ENCODE measurements at regions of chr14 and their contacts with region 1.

Region 1: DNA sequence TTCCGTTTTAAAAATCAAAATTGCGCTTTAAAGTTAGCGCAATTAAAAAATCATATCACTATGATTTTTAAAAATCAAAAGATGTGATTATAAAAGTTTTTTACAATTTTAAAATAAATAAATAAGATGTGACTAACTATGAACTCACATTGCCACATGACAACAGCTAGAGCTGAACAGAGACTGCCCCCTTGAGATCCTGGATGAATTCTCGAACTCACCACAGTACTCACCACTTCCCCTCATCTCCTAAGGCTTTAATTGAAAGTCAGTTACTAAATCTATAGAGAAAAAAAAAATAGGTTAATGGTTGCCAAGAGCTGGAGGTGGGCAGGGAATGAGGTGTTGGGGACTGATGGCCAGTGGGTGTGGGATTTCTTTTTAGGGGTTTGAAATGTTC is 384.2 kb downstream of the ZFP36L1 start:
- DNase-seq: peak; percentile 63
- ATAC-seq: peak; percentile 59
- H3K4me3 ChIP-seq: no peak overlapping the region
- H3K27ac ChIP-seq: peak overlapping the region; percentile 22; the same call in 1 of the 2 replicates
- H3K4me1 ChIP-seq: peaks cover 56% of the 10 kb centered on the region
- H3K27me3 ChIP-seq: no peaks in the 10 kb centered on the region
- CTCF ChIP-seq: peak; percentile 63

Region 2: GRCh38 chr14:68244262-68244980 is 164.3 kb before region 1 on chr14:
- CTCF ChIA-PET with region 1: no interaction called
- POLR2A ChIA-PET with region 1: no interaction called
- intact Hi-C with region 1: no loop called
- DNase-seq: no peak
- ATAC-seq: no peak
- H3K4me3 ChIP-seq: no peak overlapping the region
- H3K27ac ChIP-seq: no peak overlapping the region
- H3K4me1 ChIP-seq: peaks cover 41% of the 10 kb centered on the region
- H3K27me3 ChIP-seq: no peaks in the 10 kb centered on the region
- CTCF ChIP-seq: no peak

Region 3: DNA sequence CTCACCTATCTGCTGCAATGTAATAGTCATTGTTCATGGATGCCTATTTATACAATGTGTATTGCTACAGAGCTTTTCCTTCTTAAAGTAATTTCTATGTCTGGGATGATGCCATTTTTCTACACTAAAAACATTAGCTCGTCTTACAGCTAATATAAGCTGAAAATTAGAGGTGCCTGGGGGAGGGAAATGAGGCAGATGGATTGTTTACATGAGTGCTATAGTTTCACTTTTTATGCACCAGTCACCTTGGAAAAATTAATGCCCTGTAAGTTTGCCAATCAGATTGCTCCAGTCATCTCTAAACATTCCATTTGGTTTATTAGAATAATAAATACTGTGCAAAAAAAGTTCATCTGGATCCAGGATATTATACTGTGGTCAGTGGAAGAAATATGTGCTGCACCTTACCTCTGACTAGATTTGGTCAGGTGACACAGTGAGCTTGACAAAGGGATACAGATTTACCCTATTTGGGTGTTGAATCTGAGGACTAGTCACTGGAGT is 152.9 kb before region 1 on chr14:
- CTCF ChIA-PET with region 1: interaction called, 3 read pairs
- POLR2A ChIA-PET with region 1: interaction called, 11 read pairs
- intact Hi-C with region 1: loop called (anchors 1 kb)
- DNase-seq: peak; percentile 94
- ATAC-seq: peak; percentile 98
- H3K4me3 ChIP-seq: no peak overlapping the region
- H3K27ac ChIP-seq: peak overlapping the region; percentile 29
- H3K4me1 ChIP-seq: peaks cover 33% of the 10 kb centered on the region
- H3K27me3 ChIP-seq: no peaks in the 10 kb centered on the region
- CTCF ChIP-seq: no peak

Region 4: DNA sequence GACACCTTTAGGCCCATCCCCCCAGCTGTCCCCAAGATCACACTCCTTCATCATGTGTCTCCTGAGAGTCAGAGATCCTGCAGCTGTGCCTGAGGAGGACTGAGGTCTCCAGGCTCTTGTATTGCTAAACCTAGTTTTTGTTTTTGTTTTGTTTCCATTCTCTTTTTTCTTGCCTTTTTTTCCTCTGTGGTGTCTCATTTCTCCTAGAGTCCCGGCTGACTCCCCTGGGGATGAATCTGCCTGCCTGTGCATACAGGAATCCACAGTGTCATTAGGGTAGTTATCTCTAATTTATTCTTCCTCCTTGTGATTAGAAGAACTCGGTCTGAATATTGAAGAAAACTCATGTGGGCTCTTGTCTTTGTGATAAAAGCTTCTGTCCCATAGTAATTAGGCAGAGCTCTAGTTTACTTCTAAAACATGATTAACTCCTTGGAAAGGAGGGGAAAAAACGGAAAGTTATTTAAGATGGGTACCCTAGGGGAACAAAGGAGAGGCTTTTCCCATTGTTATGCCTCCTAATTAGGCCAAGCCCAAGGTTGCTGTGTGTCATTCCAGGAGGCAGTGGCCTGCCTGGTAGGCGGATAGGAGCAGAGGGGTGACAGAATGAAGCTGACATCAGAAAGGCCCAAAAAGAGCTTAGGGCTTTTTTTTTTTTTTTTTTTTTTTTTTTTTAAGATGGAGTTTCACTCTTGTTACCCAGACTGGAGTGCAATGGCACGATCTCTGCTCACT is 41.0 kb after region 1 on chr14:
- CTCF ChIA-PET with region 1: no interaction called
- POLR2A ChIA-PET with region 1: no interaction called
- intact Hi-C with region 1: loop called (anchors 2 kb)
- DNase-seq: no peak
- ATAC-seq: no peak
- H3K4me3 ChIP-seq: no peak overlapping the region
- H3K27ac ChIP-seq: no peak overlapping the region
- H3K4me1 ChIP-seq: peaks cover 24% of the 10 kb centered on the region
- H3K27me3 ChIP-seq: no peaks in the 10 kb centered on the region
- CTCF ChIP-seq: no peak

Region 5: DNA sequence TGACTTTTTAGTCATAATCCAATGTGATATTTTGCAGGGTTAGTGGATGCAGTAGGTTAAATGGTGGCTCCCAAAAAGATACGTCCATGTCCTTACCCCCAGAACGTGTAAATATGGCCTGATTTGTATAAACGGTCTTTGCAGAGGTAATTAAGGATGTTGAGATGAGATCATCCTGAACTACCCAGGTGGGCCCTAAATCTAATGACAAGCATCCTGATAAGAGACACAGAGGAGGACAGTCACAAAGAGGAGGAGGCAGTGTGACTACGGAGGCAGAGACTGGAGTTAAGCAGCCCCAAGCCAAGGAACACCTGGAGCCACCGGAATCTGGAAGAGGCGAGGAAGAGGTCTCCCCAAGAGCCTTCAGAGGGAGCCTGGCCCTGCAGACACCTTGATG is 90.8 kb after region 1 on chr14:
- CTCF ChIA-PET with region 1: no interaction called
- POLR2A ChIA-PET with region 1: no interaction called
- intact Hi-C with region 1: no loop called
- DNase-seq: no peak
- ATAC-seq: no peak
- H3K4me3 ChIP-seq: no peak overlapping the region
- H3K27ac ChIP-seq: no peak overlapping the region
- H3K4me1 ChIP-seq: 0 out of 2 replicates have a peak, but pooled peaks cover 5% of the 10 kb centered on the region
- H3K27me3 ChIP-seq: no peaks in the 10 kb centered on the region
- CTCF ChIP-seq: no peak

Measured in PC-3 (cell line).